Right ventricle myocardium inferior (tissue), 1 donor: ENCODE measurements at regions of chr1 and their contacts with region 1.

Region 1: DNA sequence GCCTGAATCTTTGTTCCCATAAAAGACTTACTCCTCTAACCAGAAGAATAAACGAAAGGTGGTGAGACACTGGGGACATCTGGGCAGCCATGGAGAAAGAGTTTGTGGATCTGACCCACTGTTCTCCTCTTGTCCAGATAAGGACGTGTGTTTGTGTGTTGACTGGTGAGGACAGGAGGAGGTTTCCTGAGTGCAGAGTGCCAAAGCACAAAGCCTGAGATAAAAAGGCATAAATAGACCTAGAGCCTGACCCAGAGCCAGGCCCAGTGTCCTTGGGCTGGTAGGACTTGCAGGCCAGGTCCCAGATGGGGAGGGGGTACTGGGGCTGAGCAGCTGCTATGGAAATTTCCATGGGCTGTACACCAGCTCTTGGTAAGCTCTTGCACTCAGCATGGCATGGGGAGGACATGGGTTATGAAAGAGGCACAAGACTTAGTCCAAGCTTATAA is 19.6 kb upstream of the COQ8A start:
- DNase-seq: peak; percentile 83
- ATAC-seq: peak; percentile 93

Region 2: DNA sequence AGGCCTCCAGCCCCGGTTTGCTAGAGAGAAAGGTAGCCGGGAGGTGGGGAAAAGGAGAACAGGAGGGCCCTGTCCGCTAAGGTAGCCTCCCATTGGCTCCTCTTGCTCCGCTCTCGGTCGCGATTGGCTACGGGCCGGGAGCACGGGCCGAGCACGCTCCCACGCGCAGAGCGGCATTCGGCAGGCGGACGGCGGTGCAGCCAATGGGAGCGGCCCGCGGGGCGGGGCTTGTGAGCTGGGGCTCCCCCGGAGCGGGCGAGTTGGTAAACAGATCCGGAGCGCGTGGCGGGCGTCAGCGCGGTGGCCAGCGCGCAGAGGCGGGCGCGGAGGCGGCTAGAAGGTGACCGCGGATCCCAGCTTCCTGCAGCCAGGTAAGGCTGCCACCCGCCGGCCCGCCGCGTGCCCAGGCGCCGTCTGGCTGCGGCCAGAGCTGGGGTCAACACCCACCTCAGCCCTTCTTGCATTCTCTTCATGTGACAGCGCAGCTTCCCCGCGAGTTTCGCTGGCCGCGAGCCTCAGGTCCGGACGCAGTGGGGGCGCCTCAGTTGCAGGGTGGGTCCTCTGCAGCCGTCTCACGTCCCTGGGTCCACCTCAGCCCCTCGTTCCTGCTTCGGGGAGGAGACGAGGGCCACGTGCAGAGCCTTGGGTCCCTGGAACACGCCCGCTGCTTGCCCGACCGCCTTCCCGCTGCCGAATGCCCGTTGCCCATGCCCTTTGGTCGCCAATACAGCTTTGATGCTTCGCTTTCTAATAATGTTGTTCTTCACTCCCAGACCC is 19.7 kb after region 1 on chr1 and contains the start of gene COQ8A:
- intact Hi-C with region 1: loop called (anchors 2 kb)
- DNase-seq: peak; percentile 100
- ATAC-seq: peak; percentile 97
- total RNA-seq, gene COQ8A: 412 TPM

Region 3: DNA sequence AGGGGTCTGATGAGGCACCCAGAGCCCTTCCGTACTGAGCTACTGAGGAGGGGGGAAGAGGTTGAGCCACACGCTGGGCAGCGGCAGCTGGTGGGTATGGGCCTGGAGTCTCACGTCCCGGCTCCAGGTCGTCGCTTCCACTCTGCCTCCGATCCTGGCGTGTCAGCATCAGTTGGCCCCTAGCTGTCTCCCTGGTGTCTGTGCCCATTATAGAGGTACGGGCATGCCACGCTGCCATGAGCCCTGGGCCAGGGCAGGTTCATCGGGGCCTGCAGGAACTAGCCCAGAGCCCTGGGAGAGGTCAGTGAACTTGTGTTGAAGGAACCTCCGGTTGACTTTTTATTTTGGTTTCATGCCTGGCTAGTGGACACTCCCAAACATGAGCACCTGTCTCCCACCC is 37.8 kb after region 1 on chr1:
- intact Hi-C with region 1: loop called (anchors 5 kb)
- DNase-seq: no peak
- ATAC-seq: peak; percentile 7

Region 4: DNA sequence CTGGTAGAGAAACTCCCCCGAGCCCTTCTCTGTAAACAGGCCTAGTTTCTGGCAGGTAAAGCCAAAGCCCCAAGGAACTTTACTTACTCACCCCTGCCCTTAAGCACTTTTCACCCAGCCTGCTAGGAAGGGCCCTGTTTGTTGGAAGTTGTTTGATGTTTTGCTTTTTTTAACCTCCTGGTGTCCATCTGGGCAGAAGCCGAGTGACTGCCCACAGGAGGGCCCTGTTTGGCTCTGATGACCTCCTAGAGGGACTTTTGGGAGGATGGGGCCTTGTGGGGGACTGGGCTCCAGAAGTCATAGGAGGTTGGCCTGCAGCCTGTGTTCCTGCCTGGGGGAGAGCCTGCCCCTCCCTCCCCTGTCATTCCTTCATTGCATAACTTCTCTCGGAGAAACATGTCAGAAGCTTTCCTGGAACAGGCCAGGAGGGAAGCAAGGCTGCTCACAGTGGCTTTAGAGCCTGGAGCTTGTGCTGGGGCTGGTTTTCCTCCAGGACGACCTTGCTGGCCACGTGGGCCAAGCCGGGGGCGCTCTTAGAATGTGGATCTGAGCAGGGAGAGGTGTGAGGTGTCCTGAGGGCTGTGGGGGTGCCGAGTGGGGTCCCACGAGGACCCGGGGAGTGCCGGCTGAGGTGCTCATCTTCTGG is 53.6 kb after region 1 on chr1:
- intact Hi-C with region 1: loop called (anchors 2 kb)
- DNase-seq: peak; percentile 73
- ATAC-seq: peak; percentile 74

Region 5: DNA sequence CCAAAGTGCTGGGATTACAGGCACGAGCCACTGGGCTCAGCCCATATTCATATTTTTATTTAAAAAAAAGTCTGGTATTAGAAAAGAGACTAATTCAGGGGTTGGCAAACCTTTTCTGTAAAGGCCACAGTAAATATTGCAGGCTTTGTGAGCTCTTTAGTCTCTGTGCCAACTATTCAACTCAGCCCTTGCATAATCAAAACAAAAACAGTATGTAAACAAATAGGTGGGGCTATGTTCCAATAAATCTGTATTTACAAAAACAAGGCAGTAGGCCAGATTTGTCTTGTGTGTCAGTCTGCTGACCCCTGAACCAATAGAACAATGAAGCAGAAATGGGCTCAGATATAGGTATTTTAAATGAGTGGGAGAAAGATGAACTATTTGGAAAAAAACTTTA is 348.5 kb after region 1 on chr1:
- intact Hi-C with region 1: no loop called
- DNase-seq: no peak
- ATAC-seq: no peak